Esophagus squamous epithelium (tissue), 5 donors: ENCODE measurements at regions of chrX and their contacts with region 1.

Region 1: DNA sequence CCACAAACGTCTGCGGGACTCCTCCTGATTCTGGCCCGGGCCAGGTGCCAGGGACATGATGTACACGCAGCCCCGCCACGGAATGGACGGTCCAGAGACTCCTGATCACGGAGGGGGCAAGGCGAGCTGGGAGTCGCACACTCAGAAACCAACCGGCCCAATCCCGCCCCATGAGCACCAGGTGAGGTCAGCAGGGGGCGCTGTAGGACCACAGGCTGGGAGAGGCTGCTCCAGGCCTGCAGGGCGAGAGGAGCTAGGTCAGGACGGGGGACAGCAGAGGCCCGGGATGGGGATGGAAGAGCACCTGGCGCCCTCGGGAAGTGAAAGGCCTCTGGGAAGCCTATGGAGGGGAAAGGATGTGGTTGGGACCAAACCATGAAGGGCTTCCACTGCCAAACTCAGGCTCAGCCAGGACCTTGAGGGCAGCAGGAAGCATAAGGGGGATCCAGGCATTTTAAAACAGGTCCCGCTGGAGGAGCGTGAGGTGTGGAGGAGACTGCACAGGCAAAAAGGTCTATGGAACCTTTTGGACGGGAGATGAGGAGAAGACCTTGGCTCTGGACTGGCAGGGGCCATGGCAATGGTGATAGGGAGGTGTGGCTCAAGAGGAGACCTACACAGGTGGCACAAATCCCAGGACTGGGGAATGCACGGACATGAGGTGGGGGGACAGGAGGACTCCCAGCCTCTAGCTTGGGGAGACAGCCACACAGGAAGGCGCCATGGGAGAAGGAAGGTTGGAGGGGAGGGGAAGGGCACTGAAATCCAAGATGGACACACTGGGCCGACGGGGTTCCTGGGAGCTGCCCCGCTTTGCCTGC is 79.2 kb downstream of the MTMR1 start:
- DNase-seq: peak; percentile 9
- H3K4me3 ChIP-seq: no peak overlapping the region
- H3K27ac ChIP-seq: no peak overlapping the region
- H3K4me1 ChIP-seq: peaks cover 0 to 20% (median 0%) of the 10 kb centered on the region in 3 donors
- H3K27me3 ChIP-seq: no peaks in the 10 kb centered on the region
- CTCF ChIP-seq: peak; percentile 67 to 84 (median 76)
- POLR2A ChIP-seq: no peak

Region 2: DNA sequence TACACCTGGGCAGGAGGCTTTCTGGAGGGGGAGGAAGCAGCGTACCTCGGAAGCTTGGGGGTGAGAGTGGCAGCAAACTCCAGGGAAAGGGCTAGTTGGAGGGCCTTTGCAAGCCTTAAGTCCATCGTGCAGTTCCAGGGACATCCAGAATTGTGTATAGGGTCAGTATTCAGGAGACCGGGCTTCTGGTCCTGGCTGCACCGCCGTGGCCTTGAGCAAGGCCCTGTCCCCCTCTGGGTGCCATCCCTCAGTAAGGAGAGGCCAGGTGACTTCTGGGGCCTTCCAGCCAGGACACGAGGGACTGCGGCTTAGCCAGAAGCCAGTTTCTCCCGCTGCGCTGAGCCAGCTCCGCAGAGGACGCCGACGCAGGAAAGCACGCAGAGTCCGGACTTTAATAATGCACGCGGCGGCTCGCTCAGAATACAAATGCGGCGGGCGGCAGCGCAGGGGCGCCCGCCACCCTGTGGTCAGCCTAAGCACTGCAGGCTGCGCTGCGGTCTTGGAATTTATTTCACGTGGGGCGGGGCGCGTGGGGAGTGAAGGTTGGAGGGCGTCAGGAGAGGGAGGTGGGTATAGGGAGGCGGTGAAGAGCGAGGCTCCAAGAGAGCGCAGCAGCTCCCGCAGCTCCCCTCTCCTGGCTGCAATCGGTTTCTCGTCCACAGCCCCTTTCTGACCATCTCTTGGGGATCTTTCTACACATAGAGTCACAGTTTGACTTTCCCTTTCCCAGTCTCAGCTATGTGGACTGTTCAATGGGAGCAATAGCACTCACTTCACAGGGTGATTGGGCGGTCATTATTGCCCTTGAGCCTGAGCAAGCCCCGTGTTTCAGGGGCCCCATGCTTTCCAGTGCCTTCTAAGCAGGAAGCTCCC is 310.0 kb after region 1 on chrX:
- intact Hi-C with region 1: loop called (anchors 2 kb)
- DNase-seq: no peak
- H3K4me3 ChIP-seq: peak overlapping the region in 2 of 4 donors; percentile 0 to 46
- H3K27ac ChIP-seq: no peak overlapping the region
- H3K4me1 ChIP-seq: peaks cover 0 to 5% (median 0%) of the 10 kb centered on the region in 3 donors
- H3K27me3 ChIP-seq: peaks cover 0 to 5% (median 0%) of the 10 kb centered on the region in 4 donors
- CTCF ChIP-seq: peak; percentile 75 to 93 (median 91)
- POLR2A ChIP-seq: no peak